ENCODE measurements at regions of chr16 and their contacts with region 1.

Region 1: GRCh38 chr16:89720813-89721545 is at the starts of genes VPS9D1 and ZNF276:
- DNase-seq: peak; percentile 71 to 92 (median 85)
- ATAC-seq: peak; percentile 45
- H3K4me3 ChIP-seq: peak within 1 kb of the TSS; percentile 86 to 98
- H3K4me3 Mint-ChIP-seq: peak within 1 kb of the TSS; percentile 96
- H3K27ac ChIP-seq: peak within 1 kb of the TSS; percentile 73 to 96
- H3K27ac Mint-ChIP-seq: peak within 1 kb of the TSS; percentile 99
- H3K4me1 ChIP-seq: peaks cover 38% of the 10 kb centered on the region
- H3K4me1 Mint-ChIP-seq: peaks cover 41% of the 10 kb centered on the region
- H3K27me3 ChIP-seq: no peaks in the 10 kb centered on the region
- H3K27me3 Mint-ChIP-seq: no peaks in the 10 kb centered on the region
- CTCF ChIP-seq: no peak
- total RNA-seq, gene VPS9D1: 15.7 to 15.9 TPM
- total RNA-seq, gene ZNF276: 127 to 130 TPM

Region 2: GRCh38 chr16:89560378-89561141 is 160.4 kb before region 1 on chr16 and contains the start of gene RPL13:
- CTCF ChIA-PET with region 1: no interaction called
- POLR2A ChIA-PET with region 1: no interaction called
- intact Hi-C with region 1: loop called in 1 of 2 experiments (anchors 2 kb)
- DNase-seq: peak; percentile 81 to 97 (median 93)
- ATAC-seq: peak; percentile 89
- H3K4me3 ChIP-seq: peak within 1 kb of the TSS; percentile 73 to 90
- H3K4me3 Mint-ChIP-seq: peak within 1 kb of the TSS; percentile 89
- H3K27ac ChIP-seq: peak within 1 kb of the TSS; percentile 90 to 97
- H3K27ac Mint-ChIP-seq: peak within 1 kb of the TSS; percentile 93
- H3K4me1 ChIP-seq: peaks cover 54% of the 10 kb centered on the region
- H3K4me1 Mint-ChIP-seq: peaks cover 51% of the 10 kb centered on the region
- H3K27me3 ChIP-seq: no peaks in the 10 kb centered on the region
- H3K27me3 Mint-ChIP-seq: no peaks in the 10 kb centered on the region
- CTCF ChIP-seq: no peak
- total RNA-seq, gene RPL13: 4,632 to 4,668 TPM

Region 3: DNA sequence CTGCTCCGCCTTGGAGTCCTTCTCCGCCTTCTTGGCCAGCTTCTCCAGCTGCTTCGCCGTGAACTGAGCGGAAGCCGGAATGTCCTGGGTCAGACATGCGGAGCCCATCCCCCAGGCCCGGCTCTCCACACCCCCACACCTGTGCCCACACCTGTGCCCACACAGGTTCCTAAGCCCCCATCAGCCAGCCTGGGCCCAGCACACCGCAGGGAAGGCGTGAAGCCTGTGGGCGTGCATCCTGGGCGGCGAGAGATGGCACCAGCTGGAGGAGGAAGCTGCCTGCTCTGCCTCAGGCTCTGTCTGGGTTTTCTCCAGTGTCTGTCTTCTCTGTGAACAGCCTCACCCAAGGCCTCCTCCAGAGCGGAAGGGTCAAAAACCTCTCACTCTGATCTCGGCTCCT is 69.4 kb before region 1 on chr16:
- CTCF ChIA-PET with region 1: no interaction called
- POLR2A ChIA-PET with region 1: no interaction called
- intact Hi-C with region 1: no loop called
- DNase-seq: no peak
- ATAC-seq: no peak
- H3K4me3 ChIP-seq: no peak overlapping the region
- H3K4me3 Mint-ChIP-seq: no peak overlapping the region
- H3K27ac ChIP-seq: no peak overlapping the region
- H3K27ac Mint-ChIP-seq: no peak overlapping the region
- H3K4me1 ChIP-seq: peaks cover 4% of the 10 kb centered on the region
- H3K4me1 Mint-ChIP-seq: peaks cover 19% of the 10 kb centered on the region
- H3K27me3 ChIP-seq: no peaks in the 10 kb centered on the region
- H3K27me3 Mint-ChIP-seq: no peaks in the 10 kb centered on the region
- CTCF ChIP-seq: no peak

Region 4: GRCh38 chr16:89686520-89687091 is 34.4 kb before region 1 on chr16 and contains the start of gene CDK10:
- CTCF ChIA-PET with region 1: no interaction called
- POLR2A ChIA-PET with region 1: no interaction called
- intact Hi-C with region 1: loop called in 1 of 2 experiments (anchors 1 kb)
- DNase-seq: peak; percentile 76 to 94 (median 88)
- ATAC-seq: peak; percentile 92
- H3K4me3 ChIP-seq: peak within 1 kb of the TSS; percentile 79 to 98
- H3K4me3 Mint-ChIP-seq: peak within 1 kb of the TSS; percentile 89
- H3K27ac ChIP-seq: peak within 1 kb of the TSS; percentile 76 to 84
- H3K27ac Mint-ChIP-seq: peak within 1 kb of the TSS; percentile 92
- H3K4me1 ChIP-seq: peaks cover 15% of the 10 kb centered on the region
- H3K4me1 Mint-ChIP-seq: peaks cover 14% of the 10 kb centered on the region
- H3K27me3 ChIP-seq: no peaks in the 10 kb centered on the region
- H3K27me3 Mint-ChIP-seq: no peaks in the 10 kb centered on the region
- CTCF ChIP-seq: no peak
- total RNA-seq, gene CDK10: 67.0 to 73.1 TPM

Region 5: DNA sequence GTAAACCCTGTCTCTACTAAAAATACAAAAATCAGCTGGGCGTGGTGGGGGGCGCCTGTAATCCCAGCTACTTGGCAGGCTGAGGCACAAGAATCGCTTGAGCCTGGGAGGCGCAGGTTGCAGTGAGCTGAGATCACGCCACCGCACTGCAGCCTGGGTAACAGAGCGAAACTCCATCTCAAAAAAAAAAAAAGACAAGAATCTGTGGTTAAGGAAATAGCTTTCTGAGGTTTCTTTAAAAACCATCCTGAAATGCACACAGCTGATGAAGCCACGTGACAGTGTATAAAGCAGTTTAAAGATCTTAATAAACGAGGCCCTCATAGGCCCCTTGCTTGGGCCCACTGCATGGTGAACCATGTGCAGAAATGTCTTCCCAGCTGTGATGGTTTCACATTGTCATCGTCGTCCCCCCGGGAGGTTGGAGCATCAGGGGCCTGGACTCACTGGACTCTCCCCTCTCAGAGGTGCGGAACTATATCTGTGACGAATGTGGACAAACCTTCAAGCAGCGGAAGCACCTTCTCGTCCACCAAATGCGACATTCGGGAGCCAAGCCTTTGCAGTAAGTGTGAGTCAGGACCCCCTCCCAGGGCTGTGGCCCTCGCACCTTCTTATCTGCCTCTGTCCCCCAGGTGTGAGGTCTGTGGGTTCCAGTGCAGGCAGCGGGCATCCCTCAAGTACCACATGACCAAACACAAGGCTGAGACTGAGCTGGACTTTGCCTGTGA is 16.5 kb after region 1 on chr16:
- CTCF ChIA-PET with region 1: interaction called, 19 read pairs
- POLR2A ChIA-PET with region 1: interaction called, 114 read pairs
- intact Hi-C with region 1: loop called (anchors 1 kb)
- DNase-seq: peak in 6 of 9 experiments; percentile 19 to 85 (median 65)
- ATAC-seq: peak; percentile 73
- H3K4me3 ChIP-seq: no peak overlapping the region
- H3K4me3 Mint-ChIP-seq: peak overlapping the region; percentile 43
- H3K27ac ChIP-seq: peak overlapping the region in 1 of 2 experiments; percentile 6
- H3K27ac Mint-ChIP-seq: peak overlapping the region; percentile 82
- H3K4me1 ChIP-seq: peaks cover 54% of the 10 kb centered on the region
- H3K4me1 Mint-ChIP-seq: peaks cover 48% of the 10 kb centered on the region
- H3K27me3 ChIP-seq: no peaks in the 10 kb centered on the region
- H3K27me3 Mint-ChIP-seq: no peaks in the 10 kb centered on the region
- CTCF ChIP-seq: no peak

Region 6: DNA sequence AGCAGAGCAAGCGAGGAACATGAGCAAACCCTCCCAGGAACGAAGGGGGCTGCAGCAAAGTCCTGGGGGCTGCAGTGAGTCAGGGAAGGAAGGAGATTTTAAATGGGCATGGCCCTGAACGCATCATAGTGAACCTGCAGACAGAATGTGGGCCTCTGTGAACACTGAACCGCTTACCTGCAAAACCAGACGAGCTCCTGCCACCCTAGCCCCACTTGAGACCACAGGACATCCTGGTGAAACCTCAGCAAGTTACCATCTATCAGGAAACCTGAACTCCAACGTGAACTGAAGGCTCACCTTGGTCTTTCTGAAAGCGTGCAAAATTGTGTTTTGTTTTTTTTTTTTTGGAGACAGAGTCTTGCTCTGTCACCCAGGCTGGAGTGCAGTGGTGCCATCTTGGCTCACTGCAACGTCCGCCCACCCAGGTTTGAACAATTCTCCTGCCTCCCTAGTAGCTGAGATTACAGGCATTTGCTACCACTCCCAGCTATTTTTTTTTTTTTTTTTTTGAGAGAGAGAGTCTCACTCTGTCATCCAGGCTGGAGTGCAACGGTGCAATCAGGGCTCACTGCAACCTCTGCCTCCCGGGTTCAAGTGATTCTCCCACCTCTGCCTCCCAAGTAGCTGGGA is 64.7 kb after region 1 on chr16:
- CTCF ChIA-PET with region 1: interaction called, 4 read pairs
- POLR2A ChIA-PET with region 1: interaction called, 21 read pairs
- intact Hi-C with region 1: loop called (anchors 2 kb)
- DNase-seq: peak; percentile 22 to 85 (median 65)
- ATAC-seq: peak; percentile 68
- H3K4me3 ChIP-seq: no peak overlapping the region
- H3K4me3 Mint-ChIP-seq: peak overlapping the region; percentile 57
- H3K27ac ChIP-seq: peak overlapping the region in 1 of 2 experiments; percentile 15
- H3K27ac Mint-ChIP-seq: peak overlapping the region; percentile 91
- H3K4me1 ChIP-seq: peaks cover 34% of the 10 kb centered on the region
- H3K4me1 Mint-ChIP-seq: peaks cover 30% of the 10 kb centered on the region
- H3K27me3 ChIP-seq: no peaks in the 10 kb centered on the region
- H3K27me3 Mint-ChIP-seq: no peaks in the 10 kb centered on the region
- CTCF ChIP-seq: no peak

Region 7: DNA sequence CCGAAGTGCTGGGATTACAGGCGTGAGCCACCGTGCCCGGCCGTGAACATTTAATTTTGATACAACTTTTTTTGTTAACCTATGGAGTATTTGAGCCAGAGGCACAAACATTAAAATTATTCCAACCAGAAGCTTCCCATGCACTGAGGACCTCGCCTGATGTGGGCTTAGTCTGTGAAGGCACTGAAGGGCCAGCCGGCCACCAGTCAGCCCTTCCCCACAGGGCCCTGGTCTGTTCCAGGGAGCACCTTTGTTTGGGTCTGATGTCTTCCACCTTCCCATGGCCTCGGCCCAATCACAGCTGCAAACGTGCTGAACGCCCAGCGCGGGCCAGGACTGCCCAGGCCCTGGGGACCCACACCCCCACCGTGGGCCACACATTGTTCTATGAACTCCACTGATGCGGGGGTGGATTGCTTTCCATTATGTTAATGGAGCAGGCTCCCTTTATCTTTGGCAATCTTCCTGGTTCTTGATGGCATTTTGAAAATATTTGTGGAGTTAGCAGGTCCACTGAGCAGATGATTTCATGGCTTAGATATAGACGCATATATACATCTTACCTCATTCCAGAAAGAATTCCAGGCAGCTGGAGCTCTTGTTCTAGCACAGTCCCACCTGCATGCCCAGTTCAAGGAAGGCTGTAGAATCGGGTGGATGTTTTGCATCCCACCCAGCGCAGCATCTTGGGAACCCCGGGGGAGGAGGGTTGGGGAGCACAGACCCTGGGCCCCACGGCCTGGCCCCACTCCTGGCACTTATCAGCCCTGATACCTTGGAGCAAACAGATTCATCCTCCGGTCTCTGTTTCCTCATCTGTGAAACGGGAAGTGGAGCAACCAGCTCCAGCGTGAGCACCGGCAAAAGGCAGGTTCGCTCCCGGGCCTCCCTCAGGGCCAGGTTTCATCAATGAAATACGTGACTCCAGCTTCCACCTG is 121.8 kb after region 1 on chr16:
- CTCF ChIA-PET with region 1: no interaction called
- POLR2A ChIA-PET with region 1: no interaction called
- intact Hi-C with region 1: no loop called
- DNase-seq: peak in 1 of 9 experiments; percentile 12
- ATAC-seq: no peak
- H3K4me3 ChIP-seq: no peak overlapping the region
- H3K4me3 Mint-ChIP-seq: no peak overlapping the region
- H3K27ac ChIP-seq: no peak overlapping the region
- H3K27ac Mint-ChIP-seq: no peak overlapping the region
- H3K4me1 ChIP-seq: peaks cover 34% of the 10 kb centered on the region
- H3K4me1 Mint-ChIP-seq: peaks cover 27% of the 10 kb centered on the region
- H3K27me3 ChIP-seq: no peaks in the 10 kb centered on the region
- H3K27me3 Mint-ChIP-seq: no peaks in the 10 kb centered on the region
- CTCF ChIP-seq: no peak

Region 8: DNA sequence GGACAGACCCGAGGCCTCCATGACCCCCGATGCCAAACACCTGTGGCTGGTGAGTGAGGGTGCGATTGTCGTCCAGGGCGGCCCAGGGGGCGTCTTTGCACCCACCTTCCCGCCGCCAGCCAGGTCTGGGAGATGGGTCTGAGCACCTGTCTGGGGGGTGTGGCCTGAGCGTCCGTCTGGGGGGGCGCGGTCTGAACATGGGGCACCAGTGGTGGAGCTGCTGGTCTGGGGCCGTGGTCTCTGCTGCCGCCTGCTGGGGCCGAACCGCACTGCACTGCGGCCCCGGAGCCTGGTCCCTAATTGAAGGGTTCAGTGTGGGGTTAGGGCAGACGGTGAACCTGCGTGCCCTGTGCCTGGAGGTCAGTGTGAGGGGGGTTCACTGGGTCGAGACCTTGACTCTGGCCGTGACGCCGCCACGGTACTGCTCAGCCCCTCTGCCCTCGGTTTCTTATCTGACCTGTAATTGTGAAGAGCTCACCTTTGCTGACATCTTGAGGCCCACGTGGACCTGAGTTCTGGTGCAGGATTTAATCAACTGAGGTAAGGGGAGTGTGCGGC is 139.8 kb after region 1 on chr16:
- CTCF ChIA-PET with region 1: interaction called, 17 read pairs
- POLR2A ChIA-PET with region 1: interaction called, 8 read pairs
- intact Hi-C with region 1: no loop called
- DNase-seq: peak; percentile 61 to 87 (median 76)
- ATAC-seq: peak; percentile 92
- H3K4me3 ChIP-seq: no peak overlapping the region
- H3K4me3 Mint-ChIP-seq: no peak overlapping the region
- H3K27ac ChIP-seq: no peak overlapping the region
- H3K27ac Mint-ChIP-seq: no peak overlapping the region
- H3K4me1 ChIP-seq: peaks cover 30% of the 10 kb centered on the region
- H3K4me1 Mint-ChIP-seq: peaks cover 29% of the 10 kb centered on the region
- H3K27me3 ChIP-seq: peaks cover 0 to 2% of the 10 kb centered on the region in 2 experiments
- H3K27me3 Mint-ChIP-seq: no peaks in the 10 kb centered on the region
- CTCF ChIP-seq: peak; percentile 98

Measured in CD8-positive, alpha-beta T cell (primary cell).